Activated B cell treated with CpG ODN at 0.5 μM for 24 hours (primary cell): ENCODE measurements at regions of chr6 and their contacts with region 1.

Region 1: DNA sequence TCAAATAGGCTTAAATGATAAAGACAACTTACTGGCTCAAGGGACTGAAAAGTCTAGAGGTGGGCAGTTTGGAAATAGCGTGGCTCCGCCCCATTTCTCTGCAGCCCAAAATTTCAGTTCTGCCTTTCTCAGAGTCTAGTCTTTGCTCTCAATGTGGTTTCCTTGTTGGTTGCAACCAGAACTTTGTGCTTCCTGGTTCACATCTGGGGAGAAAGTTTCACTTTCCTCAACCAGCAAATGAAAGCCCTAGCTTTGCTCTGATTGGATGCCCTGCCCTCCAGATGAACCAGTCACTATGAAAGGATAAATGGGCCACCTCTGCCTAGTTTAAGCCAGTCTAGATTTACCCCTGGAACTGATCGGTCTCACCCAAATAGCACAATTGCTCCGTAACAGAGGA is 14.9 kb downstream of the SYCP2L start:
- DNase-seq: no peak
- ATAC-seq: peak; percentile 94
- H3K4me3 Mint-ChIP-seq: peak overlapping the region; percentile 70
- H3K27ac Mint-ChIP-seq: peak overlapping the region; percentile 89
- H3K4me1 Mint-ChIP-seq: peaks cover 15% of the 10 kb centered on the region
- H3K27me3 Mint-ChIP-seq: no peaks in the 10 kb centered on the region
- CTCF ChIP-seq: no peak

Region 2: GRCh38 chr6:10528170-10528981 is 373.4 kb before region 1 on chr6:
- CTCF ChIA-PET with region 1: no interaction called
- POLR2A ChIA-PET with region 1: no interaction called
- intact Hi-C with region 1: loop called (anchors 5 kb)
- DNase-seq: no peak
- ATAC-seq: peak; percentile 57
- H3K4me3 Mint-ChIP-seq: peak overlapping the region; percentile 97
- H3K27ac Mint-ChIP-seq: peak overlapping the region; percentile 96
- H3K4me1 Mint-ChIP-seq: peaks cover 65% of the 10 kb centered on the region
- H3K27me3 Mint-ChIP-seq: no peaks in the 10 kb centered on the region
- CTCF ChIP-seq: no peak

Region 3: DNA sequence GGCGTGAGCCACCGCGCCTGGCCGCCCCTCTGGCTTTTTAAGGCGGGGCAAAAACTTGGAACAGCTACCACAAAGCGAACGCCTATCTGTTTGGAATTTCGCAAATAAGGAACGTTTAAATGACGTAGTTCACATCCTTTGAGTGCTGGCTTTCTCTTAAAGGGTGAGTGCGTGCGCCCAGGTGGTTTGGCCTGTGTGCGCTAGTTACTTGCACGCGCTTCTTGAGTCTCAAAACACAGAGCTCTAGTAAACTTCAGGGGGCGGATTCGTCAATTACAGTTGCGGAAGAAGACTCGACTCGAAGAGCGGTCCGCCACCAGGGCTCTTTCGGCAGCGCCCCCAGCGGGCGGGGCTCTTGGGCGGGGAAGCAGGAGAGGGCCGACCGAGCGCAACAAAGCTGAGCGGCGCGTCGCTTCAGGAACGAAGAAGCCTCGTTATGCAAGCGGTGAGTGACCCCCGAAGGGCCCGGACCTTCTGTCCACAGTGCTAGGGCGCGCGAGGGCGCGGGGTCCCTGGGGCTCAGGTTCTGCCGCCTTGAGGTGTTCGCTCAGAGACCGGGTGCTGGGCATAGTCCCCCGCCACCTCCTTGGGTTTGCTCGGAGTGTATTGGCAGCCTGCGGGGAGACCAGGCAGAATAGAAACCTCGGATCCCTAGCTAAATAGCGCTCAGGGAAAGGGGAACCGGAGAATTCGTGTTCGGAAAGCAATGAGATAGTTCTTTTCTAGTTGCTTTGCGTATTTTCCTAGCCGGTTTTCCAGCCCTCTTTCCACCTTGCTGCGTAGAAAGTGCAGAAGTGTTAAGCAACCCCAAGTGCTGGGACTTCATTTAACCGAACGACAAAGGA is 14.9 kb before region 1 on chr6 and contains the start of gene SYCP2L:
- CTCF ChIA-PET with region 1: no interaction called
- POLR2A ChIA-PET with region 1: interaction called, 10 read pairs
- intact Hi-C with region 1: loop called (anchors 1 kb)
- DNase-seq: no peak
- ATAC-seq: peak; percentile 10
- H3K4me3 Mint-ChIP-seq: peak within 1 kb of the TSS; percentile 67
- H3K27ac Mint-ChIP-seq: no peak within 1 kb of the TSS
- H3K4me1 Mint-ChIP-seq: peaks cover 39% of the 10 kb centered on the region
- H3K27me3 Mint-ChIP-seq: peaks cover 48% of the 10 kb centered on the region
- CTCF ChIP-seq: no peak
- total RNA-seq, gene SYCP2L: 0.13 and 0.17 TPM in 2 replicates

Region 4: DNA sequence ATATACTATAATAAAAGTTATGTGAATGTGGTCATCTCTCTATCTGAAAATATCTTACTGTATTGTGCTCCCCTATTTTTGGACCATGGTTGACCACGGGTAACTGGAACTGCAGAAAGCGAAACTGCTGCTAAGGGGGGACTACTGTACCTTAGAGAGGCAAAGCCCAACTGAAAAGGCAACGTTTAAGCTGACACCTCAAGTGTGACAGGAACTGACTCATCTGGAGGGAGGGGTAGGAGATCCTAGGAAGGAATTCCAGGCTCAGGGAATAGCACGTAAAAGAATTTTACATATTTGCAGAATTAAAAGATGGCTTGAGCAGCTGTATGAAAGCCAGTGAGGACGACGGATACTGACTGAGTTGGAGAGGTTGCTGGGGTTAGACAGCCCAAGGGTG is 107.6 kb after region 1 on chr6:
- CTCF ChIA-PET with region 1: no interaction called
- POLR2A ChIA-PET with region 1: no interaction called
- intact Hi-C with region 1: no loop called
- DNase-seq: no peak
- ATAC-seq: no peak
- H3K4me3 Mint-ChIP-seq: no peak overlapping the region
- H3K27ac Mint-ChIP-seq: no peak overlapping the region
- H3K4me1 Mint-ChIP-seq: no peaks in the 10 kb centered on the region
- H3K27me3 Mint-ChIP-seq: peaks cover 17% of the 10 kb centered on the region
- CTCF ChIP-seq: no peak

Region 5: GRCh38 chr6:11043961-11044711 is 142.4 kb after region 1 on chr6 and contains the start of gene ELOVL2:
- CTCF ChIA-PET with region 1: no interaction called
- POLR2A ChIA-PET with region 1: no interaction called
- intact Hi-C with region 1: loop called (anchors 5 kb)
- DNase-seq: peak; percentile 31
- ATAC-seq: peak; percentile 77
- H3K4me3 Mint-ChIP-seq: peak within 1 kb of the TSS; percentile 59
- H3K27ac Mint-ChIP-seq: no peak within 1 kb of the TSS
- H3K4me1 Mint-ChIP-seq: peaks cover 14% of the 10 kb centered on the region
- H3K27me3 Mint-ChIP-seq: peaks cover 41% of the 10 kb centered on the region
- CTCF ChIP-seq: no peak
- total RNA-seq, gene ELOVL2: not detected in 2 replicates

Region 6: DNA sequence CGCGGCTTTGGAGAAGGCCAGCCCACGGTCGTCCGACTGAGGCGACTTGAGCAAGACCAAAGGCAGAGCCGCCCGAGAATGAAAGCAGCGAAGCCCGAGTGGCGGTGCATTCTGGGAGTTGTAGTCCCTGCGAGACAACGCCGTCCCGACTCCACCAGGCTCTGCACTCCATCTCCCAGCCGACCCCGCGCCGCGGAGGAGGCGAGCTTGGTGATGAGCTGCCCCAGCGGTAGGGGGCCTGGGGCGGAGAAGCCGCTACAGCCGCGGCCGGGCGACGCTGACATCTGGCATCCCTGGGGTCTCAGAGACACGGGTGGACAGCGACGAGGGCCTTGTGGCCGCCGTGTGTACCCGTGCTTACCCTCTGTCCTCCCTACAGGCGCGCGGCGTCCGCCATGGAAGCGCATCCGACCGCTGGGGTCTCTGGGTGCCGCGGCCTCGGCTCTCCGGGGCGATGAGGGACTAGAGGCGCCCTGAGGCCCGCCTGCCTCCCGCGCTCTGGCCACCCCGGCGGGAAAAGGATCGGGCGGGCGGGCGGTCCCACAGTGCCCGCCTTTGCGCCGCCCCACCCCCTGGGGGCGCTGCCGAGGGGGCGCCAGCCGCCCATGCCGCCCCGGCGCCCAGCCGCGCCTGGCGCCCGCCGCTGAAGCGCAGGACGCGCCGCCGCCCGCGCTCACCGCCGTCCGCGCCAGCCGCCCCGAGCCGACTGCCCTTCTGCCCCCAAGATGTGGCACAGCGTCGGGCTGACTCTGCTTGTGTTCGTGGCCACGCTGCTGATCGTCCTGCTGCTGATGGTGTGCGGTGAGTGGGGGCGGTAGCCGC is 192.0 kb after region 1 on chr6 and contains the start of gene SMIM13:
- CTCF ChIA-PET with region 1: no interaction called
- POLR2A ChIA-PET with region 1: no interaction called
- intact Hi-C with region 1: loop called (anchors 1 kb)
- DNase-seq: peak; percentile 90
- ATAC-seq: peak; percentile 90
- H3K4me3 Mint-ChIP-seq: peak within 1 kb of the TSS; percentile 96
- H3K27ac Mint-ChIP-seq: peak within 1 kb of the TSS; percentile 98
- H3K4me1 Mint-ChIP-seq: peaks cover 20% of the 10 kb centered on the region
- H3K27me3 Mint-ChIP-seq: peaks cover 3% of the 10 kb centered on the region
- CTCF ChIP-seq: no peak
- total RNA-seq, gene SMIM13: 5.8 and 5.9 TPM in 2 replicates

Region 7: DNA sequence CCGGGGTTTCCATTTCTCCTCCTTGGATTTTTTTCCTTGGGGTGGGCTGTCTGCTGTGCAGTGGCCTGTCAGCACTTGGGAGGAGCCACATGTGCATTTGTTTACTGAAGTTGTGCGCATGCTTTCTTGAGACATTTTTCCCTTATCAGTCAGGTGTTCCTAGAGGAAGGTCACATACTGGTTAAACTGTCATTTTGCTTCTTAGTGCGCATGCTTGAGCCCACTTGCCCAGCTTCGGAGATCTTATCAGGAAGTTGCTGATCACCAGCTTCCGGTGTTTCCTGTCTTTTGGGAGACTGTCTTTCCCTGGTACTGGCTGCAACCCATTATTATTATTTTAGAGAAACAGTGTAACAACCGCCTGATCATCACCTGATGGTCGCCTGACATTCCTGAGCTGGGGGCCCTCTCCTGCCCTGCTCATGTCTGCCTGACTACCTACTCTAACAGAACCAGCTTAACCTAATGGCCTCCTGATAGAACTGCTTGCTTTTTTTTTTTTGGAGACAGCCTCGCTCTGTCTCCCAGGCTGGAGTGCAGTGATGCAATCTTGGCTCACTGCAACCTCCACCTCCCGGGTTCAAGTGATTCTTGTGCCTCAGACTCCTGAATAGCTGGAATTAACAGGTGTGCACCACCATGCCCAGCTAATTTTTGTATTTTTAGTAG is 210.1 kb after region 1 on chr6:
- CTCF ChIA-PET with region 1: no interaction called
- POLR2A ChIA-PET with region 1: no interaction called
- intact Hi-C with region 1: no loop called
- DNase-seq: no peak
- ATAC-seq: no peak
- H3K4me3 Mint-ChIP-seq: no peak overlapping the region
- H3K27ac Mint-ChIP-seq: no peak overlapping the region
- H3K4me1 Mint-ChIP-seq: peaks cover 20% of the 10 kb centered on the region
- H3K27me3 Mint-ChIP-seq: no peaks in the 10 kb centered on the region
- CTCF ChIP-seq: no peak